Activated CD8-positive, alpha-beta memory T cell treated with anti-CD3 and anti-CD28 coated beads, Interleukin-2, amount 10 ng/mL, durations not matched to agents 7 days and 5 days (primary cell): ENCODE measurements at regions of chr22 and their contacts with region 1.

Region 1: GRCh38 chr22:22884010-22884887 is 3.4 kb upstream of the IGLL5 start:
- DNase-seq: peak; percentile 84
- ATAC-seq: peak; percentile 81
- H3K4me3 Mint-ChIP-seq: no peak overlapping the region
- H3K27ac Mint-ChIP-seq: no peak overlapping the region
- H3K4me1 Mint-ChIP-seq: peaks cover 20% of the 10 kb centered on the region
- H3K27me3 Mint-ChIP-seq: peaks cover 33% of the 10 kb centered on the region

Region 2: GRCh38 chr22:22538226-22538989 is 345.8 kb before region 1 on chr22:
- CTCF ChIA-PET with region 1: no interaction called
- DNase-seq: no peak
- ATAC-seq: no peak
- H3K4me3 Mint-ChIP-seq: no peak overlapping the region
- H3K27ac Mint-ChIP-seq: no peak overlapping the region
- H3K4me1 Mint-ChIP-seq: no peaks in the 10 kb centered on the region
- H3K27me3 Mint-ChIP-seq: peaks cover 19% of the 10 kb centered on the region

Region 3: GRCh38 chr22:22710719-22711531 is 173.3 kb before region 1 on chr22:
- CTCF ChIA-PET with region 1: interaction called, 17 read pairs
- DNase-seq: peak; percentile 79
- ATAC-seq: peak; percentile 77
- H3K4me3 Mint-ChIP-seq: no peak overlapping the region
- H3K27ac Mint-ChIP-seq: no peak overlapping the region
- H3K4me1 Mint-ChIP-seq: peaks cover 4% of the 10 kb centered on the region
- H3K27me3 Mint-ChIP-seq: peaks cover 4% of the 10 kb centered on the region

Region 4: DNA sequence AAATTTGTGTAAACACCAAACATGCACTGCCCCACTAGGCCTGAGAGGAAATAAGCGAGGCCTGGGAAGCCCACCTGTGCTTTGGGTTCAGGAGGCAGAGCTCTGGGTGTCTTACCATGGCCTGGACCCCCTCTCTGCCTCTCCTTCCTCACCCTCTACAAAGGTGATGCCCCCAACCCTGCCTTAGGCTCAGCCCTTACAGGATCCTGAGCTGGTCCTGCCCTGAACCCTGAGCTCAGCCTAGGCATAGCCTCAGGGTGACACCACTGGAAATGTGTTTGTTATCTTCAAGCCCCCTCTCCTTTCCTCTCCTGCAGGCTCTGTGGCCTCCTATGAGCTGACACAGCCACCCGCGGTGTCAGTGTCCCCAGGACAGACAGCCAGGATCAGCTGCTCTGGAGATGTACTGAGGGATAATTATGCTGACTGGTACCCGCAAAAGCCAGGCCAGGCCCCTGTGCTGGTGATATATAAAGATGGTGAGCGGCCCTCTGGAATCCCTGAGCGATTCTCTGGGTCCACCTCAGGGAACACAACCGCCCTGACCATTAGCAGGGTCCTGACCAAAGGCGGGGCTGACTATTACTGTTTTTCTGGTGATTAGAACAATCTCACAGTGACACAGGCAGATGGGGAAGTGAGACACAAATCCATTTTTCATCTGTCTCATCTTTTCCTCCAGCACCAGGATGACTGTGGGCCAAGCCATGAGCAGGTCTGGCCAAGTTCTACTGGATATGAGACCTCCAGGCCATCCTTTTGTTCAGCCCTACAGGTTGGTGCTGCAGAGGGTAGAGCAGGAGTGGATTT is 122.1 kb before region 1 on chr22:
- CTCF ChIA-PET with region 1: interaction called, 11 read pairs
- DNase-seq: no peak
- ATAC-seq: no peak
- H3K4me3 Mint-ChIP-seq: no peak overlapping the region
- H3K27ac Mint-ChIP-seq: no peak overlapping the region
- H3K4me1 Mint-ChIP-seq: peaks cover 16% of the 10 kb centered on the region
- H3K27me3 Mint-ChIP-seq: peaks cover 2% of the 10 kb centered on the region

Region 5: GRCh38 chr22:22802339-22802970 is 81.8 kb before region 1 on chr22:
- CTCF ChIA-PET with region 1: interaction called, 355 read pairs
- DNase-seq: peak; percentile 60
- ATAC-seq: peak; percentile 36
- H3K4me3 Mint-ChIP-seq: no peak overlapping the region
- H3K27ac Mint-ChIP-seq: no peak overlapping the region
- H3K4me1 Mint-ChIP-seq: peaks cover 4% of the 10 kb centered on the region
- H3K27me3 Mint-ChIP-seq: peaks cover 11% of the 10 kb centered on the region

Region 6: DNA sequence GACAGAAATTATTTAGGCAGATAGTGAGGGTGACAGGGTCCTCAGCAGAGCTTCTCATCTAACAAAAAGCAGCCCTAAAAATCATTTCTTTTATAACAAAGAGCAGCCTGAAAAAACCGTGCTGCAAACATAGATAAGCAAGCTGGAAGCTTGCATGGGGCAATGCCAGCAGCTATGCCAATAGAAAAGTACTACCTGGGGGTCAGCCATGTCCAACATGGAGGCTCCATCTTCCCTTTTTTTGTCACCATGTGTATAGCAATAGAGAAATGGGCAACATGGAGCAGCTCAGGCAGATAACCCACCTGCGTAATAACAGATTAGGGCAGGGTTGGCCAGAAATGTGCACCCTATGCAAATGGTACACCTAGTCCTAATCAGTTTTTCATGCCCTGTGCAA is 54.1 kb before region 1 on chr22:
- CTCF ChIA-PET with region 1: no interaction called
- DNase-seq: no peak
- ATAC-seq: no peak
- H3K4me3 Mint-ChIP-seq: no peak overlapping the region
- H3K27ac Mint-ChIP-seq: no peak overlapping the region
- H3K4me1 Mint-ChIP-seq: peaks cover under 1% of the 10 kb centered on the region
- H3K27me3 Mint-ChIP-seq: peaks cover 19% of the 10 kb centered on the region

Region 7: GRCh38 chr22:22855617-22856308 is 28.5 kb before region 1 on chr22:
- CTCF ChIA-PET with region 1: interaction called, 223 read pairs
- DNase-seq: peak; percentile 64
- ATAC-seq: peak; percentile 86
- H3K4me3 Mint-ChIP-seq: no peak overlapping the region
- H3K27ac Mint-ChIP-seq: no peak overlapping the region
- H3K4me1 Mint-ChIP-seq: no peaks in the 10 kb centered on the region
- H3K27me3 Mint-ChIP-seq: peaks cover 33% of the 10 kb centered on the region

Region 8: DNA sequence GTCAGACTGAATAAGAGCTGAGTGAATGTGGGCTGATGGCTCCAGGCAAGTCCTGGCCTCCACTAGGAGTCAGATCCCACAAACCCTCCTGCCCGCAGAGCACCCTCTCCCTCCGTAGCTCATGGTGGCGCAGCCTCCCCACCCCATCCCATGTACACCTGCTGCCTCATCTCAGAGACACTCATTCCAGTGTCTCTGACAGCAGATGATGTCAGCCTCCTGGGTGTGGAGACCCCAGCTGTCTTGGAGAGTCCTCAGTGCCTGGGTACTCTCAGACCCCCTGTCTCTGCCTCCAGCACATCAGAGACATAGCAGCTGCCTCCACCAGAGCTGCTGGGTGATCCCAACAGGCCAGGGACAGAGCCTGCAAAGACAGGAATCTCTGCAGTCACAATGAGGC is 12.8 kb after region 1 on chr22:
- CTCF ChIA-PET with region 1: interaction called, 11 read pairs
- DNase-seq: no peak
- ATAC-seq: no peak
- H3K4me3 Mint-ChIP-seq: no peak overlapping the region
- H3K27ac Mint-ChIP-seq: no peak overlapping the region
- H3K4me1 Mint-ChIP-seq: no peaks in the 10 kb centered on the region
- H3K27me3 Mint-ChIP-seq: peaks cover 44% of the 10 kb centered on the region

Region 9: GRCh38 chr22:22995166-22995565 is 110.9 kb after region 1 on chr22:
- CTCF ChIA-PET with region 1: no interaction called
- DNase-seq: no peak
- ATAC-seq: no peak
- H3K4me3 Mint-ChIP-seq: no peak overlapping the region
- H3K27ac Mint-ChIP-seq: no peak overlapping the region
- H3K4me1 Mint-ChIP-seq: no peaks in the 10 kb centered on the region
- H3K27me3 Mint-ChIP-seq: peaks cover 59% of the 10 kb centered on the region